ENCODE measurements at regions of chr3 and their contacts with region 1.

Region 1: DNA sequence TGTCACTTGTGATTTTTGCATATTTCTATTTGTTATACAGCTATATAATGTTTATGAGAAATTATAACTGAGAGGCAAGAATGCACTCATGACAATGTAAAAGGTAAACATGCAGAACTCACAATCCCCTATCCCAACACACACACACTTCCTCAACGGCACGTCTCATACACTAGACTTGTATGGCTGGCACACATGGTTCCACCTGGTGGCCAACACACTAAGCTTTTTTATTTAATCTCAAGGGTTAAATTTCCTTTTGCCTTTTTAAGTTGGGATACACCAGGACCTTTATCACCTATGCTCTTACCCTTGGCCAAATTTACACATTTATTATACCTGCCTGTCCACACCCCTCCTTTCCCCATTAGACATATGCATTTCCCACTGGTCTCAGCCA is 88.6 kb upstream of the PSMD6 start:
- DNase-seq: no peak
- ATAC-seq: no peak
- H3K4me3 ChIP-seq: no peak overlapping the region
- H3K4me3 Mint-ChIP-seq: no peak overlapping the region
- H3K27ac ChIP-seq: no peak overlapping the region
- H3K27ac Mint-ChIP-seq: no peak overlapping the region
- H3K4me1 ChIP-seq: no peaks in the 10 kb centered on the region
- H3K4me1 Mint-ChIP-seq: no peaks in the 10 kb centered on the region
- H3K27me3 ChIP-seq: peaks cover 0 to 2% of the 10 kb centered on the region in 2 experiments
- H3K27me3 Mint-ChIP-seq: peaks cover 24% of the 10 kb centered on the region
- CTCF ChIP-seq: no peak

Region 2: DNA sequence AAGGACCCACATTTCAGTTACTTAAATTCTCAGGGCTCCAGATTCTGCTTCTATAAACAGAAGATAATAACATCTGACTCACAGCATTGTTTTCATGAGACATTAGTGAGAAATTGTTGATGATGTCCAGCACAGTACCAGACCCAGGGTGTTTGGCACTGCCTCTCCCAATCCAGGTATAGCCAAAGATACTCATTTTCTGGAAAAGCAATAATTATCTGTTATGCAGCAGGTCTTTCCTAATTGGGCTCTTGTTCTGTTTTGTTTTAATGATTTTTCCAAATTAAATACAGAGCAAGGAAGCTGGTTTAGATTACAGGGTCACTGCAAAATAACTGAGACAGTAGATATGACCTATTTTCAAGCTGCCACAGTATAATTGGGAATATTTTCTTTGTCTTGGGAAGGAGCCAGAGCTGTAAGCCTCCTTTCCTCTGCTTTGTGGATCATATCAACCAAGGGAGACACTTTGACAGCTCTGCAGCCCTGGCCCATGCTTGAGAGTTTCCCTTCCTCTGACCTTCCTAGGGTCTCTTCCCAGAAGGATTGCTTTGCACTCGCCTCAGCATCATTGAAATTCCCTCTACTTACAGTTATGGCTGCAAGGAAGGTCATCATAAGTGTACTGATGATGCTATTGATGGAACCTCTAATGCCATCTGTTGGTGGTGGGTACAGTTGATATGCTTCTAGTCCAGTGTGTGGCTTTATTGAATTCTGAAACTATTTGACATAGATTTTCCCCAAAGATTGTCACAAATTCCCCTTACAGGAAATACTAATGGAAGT is 1098.4 kb after region 1 on chr3:
- CTCF ChIA-PET with region 1: no interaction called
- POLR2A ChIA-PET with region 1: no interaction called
- intact Hi-C with region 1: loop called in 1 of 2 experiments (anchors 10 kb)
- DNase-seq: no peak
- ATAC-seq: no peak
- H3K4me3 ChIP-seq: no peak overlapping the region
- H3K4me3 Mint-ChIP-seq: no peak overlapping the region
- H3K27ac ChIP-seq: no peak overlapping the region
- H3K27ac Mint-ChIP-seq: no peak overlapping the region
- H3K4me1 ChIP-seq: no peaks in the 10 kb centered on the region
- H3K4me1 Mint-ChIP-seq: no peaks in the 10 kb centered on the region
- H3K27me3 ChIP-seq: no peaks in the 10 kb centered on the region
- H3K27me3 Mint-ChIP-seq: no peaks in the 10 kb centered on the region
- CTCF ChIP-seq: no peak